AG04450 (cell line): ENCODE measurements at regions of chr1 and their contacts with region 1.

Region 1: DNA sequence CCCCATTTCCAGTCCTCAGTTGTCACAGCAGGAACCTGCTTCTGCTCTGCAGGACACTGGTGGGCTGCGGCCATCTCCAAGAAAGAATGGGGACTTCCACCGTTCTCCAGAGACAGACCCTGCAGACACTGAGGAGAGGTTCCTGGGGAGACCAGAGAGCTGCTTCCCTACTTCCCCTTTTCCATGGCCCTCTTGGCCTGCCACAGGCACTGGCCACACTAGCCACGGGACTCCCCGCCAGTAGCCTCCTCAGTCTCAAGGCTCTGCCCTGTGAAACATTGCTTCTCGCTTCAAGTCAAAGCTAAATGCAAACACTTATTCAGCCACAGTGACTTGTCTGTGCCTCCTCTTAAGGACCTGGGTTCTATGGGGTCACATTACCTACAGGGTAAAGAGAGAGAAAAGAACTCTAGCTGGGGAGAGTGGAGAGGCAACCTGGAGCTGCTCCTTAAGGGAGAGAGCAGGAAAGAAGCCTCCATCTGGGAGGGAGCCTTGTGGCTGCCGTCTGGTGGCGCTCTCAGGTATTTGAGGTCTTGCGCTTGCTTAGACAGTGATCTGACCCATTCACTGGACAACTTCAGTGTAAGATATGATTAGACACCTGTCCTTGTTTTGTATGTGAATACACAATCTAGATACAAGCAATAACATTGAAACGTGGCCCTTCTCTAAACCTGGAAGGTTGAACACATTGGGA is 5.4 kb upstream of the SLAMF8 start:
- DNase-seq: peak; percentile 7
- H3K4me3 ChIP-seq: no peak overlapping the region
- H3K27ac ChIP-seq: no peak overlapping the region
- H3K27me3 ChIP-seq: peaks cover 11% of the 10 kb centered on the region
- CTCF ChIP-seq: peak; percentile 71

Region 2: DNA sequence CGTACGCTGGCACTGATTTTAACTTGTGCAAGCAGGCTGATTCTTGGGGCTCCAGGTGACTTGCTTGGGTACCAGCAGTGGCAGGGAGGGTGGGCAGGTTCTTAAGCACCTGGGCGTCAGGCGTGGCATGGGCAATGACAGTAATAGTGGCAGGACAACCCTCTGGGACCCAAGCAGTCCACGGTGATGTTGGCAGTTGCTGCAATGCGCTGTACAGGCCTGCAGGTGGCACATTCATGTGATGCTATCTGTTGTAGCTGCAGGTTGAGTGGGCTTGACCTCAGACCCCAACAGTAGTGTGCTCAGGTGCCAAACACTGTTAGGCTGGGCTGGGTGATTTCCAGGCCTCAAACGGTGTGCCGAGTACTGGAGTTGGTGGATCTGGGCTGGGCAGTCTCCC is 399.5 kb before region 1 on chr1:
- CTCF ChIA-PET with region 1: no interaction called
- POLR2A ChIA-PET with region 1: no interaction called
- DNase-seq: no peak
- H3K4me3 ChIP-seq: no peak overlapping the region
- H3K27ac ChIP-seq: no peak overlapping the region
- H3K27me3 ChIP-seq: no peaks in the 10 kb centered on the region
- CTCF ChIP-seq: no peak

Region 3: DNA sequence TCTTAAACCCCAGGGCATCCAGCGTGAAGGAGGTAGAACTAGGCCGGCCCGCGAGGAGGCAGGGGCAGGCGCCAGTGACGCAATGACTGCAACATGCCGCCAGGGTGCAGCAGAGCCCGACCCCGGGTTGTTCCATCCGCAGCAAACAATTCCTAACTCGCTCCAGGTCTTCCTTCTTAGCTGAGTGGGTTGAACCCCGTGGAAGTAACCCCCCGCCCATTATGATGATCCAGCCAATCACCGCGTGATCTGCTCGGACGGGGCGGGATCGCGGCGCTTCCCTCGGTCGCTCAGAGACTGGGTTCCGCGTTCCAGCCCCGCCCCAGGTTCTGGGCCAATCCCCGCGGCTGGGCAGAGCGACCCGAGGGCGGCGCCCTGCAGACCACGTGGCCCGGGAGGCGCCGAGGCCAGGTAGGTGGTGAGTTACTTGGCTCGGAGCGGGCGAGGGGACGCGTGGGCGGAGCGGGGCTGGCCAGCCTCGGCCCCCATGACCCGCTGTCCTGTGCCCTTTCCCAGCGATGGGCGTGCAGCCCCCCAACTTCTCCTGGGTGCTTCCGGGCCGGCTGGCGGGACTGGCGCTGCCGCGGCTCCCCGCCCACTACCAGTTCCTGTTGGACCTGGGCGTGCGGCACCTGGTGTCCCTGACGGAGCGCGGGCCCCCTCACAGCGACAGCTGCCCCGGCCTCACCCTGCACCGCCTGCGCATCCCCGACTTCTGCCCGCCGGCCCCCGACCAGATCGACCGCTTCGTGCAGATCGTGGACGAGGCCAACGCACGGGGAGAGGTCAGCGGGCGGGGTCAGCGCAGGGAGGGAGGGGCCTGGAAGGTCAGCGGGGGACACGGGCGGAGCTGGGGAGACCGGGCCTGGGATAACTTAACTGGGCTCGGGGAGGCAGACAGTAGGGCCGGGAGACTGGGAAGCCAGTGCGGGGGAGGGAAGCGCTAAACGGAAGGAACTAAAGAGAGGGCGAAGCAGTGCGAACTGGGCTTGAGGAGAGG is 40.4 kb before region 1 on chr1 and contains the start of gene DUSP23:
- CTCF ChIA-PET with region 1: interaction called, 10 read pairs
- POLR2A ChIA-PET with region 1: no interaction called
- DNase-seq: peak; percentile 94
- H3K4me3 ChIP-seq: peak within 1 kb of the TSS; percentile 74
- H3K27ac ChIP-seq: no peak within 1 kb of the TSS
- H3K27me3 ChIP-seq: peaks cover 4% of the 10 kb centered on the region
- CTCF ChIP-seq: peak; percentile 96
- polyA plus RNA-seq, gene DUSP23: 6.0 and 6.1 TPM in 2 replicates

Region 4: GRCh38 chr1:159804924-159805323 is 16.4 kb before region 1 on chr1:
- CTCF ChIA-PET with region 1: interaction called, 63 read pairs
- POLR2A ChIA-PET with region 1: no interaction called
- DNase-seq: no peak
- H3K4me3 ChIP-seq: no peak overlapping the region
- H3K27ac ChIP-seq: no peak overlapping the region
- H3K27me3 ChIP-seq: peaks cover 17% of the 10 kb centered on the region
- CTCF ChIP-seq: no peak